ENCODE measurements at regions of chr15 and their contacts with region 1.

Region 1: GRCh38 chr15:32730677-32731654 is 13.2 kb downstream of the GREM1 start:
- DNase-seq: peak; percentile 57
- ATAC-seq: no peak
- H3K4me3 ChIP-seq: no peak overlapping the region
- H3K27ac ChIP-seq: no peak overlapping the region
- H3K4me1 ChIP-seq: peaks cover 12% of the 10 kb centered on the region; the same call in 1 of the 2 replicates
- H3K27me3 ChIP-seq: no peaks in the 10 kb centered on the region
- CTCF ChIP-seq: no peak

Region 2: DNA sequence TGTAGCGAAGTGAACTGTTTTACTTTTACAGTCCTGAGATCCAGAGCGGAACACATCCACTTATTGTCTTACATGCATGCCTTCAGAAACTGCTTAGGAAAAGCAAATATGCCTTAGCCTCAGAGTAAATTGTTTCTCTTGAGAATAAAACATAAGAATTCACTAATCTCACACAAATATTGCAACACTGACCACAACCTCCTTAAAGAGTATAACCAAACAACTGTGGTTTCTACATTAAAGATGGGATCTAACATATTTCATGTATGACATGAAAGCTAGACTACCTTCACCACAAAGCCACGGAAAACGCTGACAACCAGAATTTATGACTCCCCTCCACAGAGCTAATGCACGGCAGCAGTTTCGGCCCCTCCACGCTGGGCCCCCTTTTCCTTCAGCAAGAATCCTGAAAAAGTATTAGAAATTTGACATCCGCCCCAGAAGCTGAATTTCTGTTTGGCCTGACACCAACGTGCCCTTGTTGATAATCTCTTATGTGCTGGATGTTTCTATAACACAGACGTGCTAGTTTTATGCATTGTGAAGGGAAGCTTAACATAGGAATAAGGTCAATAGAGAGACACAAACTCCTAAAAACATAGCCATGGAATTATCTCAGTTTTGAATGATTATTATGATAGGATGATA is 71.4 kb after region 1 on chr15:
- CTCF ChIA-PET with region 1: no interaction called
- POLR2A ChIA-PET with region 1: no interaction called
- intact Hi-C with region 1: loop called (anchors 2 kb)
- DNase-seq: peak; percentile 95
- ATAC-seq: peak; percentile 82
- H3K4me3 ChIP-seq: no peak overlapping the region
- H3K27ac ChIP-seq: peak overlapping the region; percentile 92
- H3K4me1 ChIP-seq: peaks cover 21% of the 10 kb centered on the region
- H3K27me3 ChIP-seq: no peaks in the 10 kb centered on the region
- CTCF ChIP-seq: no peak

Region 3: GRCh38 chr15:33104212-33104611 is 373.2 kb after region 1 on chr15:
- CTCF ChIA-PET with region 1: no interaction called
- POLR2A ChIA-PET with region 1: no interaction called
- intact Hi-C with region 1: no loop called
- DNase-seq: peak; percentile 91
- ATAC-seq: peak; percentile 97
- H3K4me3 ChIP-seq: peak overlapping the region; percentile 30; the same call in 1 of the 2 replicates
- H3K27ac ChIP-seq: peak overlapping the region; percentile 86
- H3K4me1 ChIP-seq: peaks cover 44% of the 10 kb centered on the region
- H3K27me3 ChIP-seq: no peaks in the 10 kb centered on the region
- CTCF ChIP-seq: no peak

Measured in PC-3 (cell line).